ENCODE measurements at regions of chr16 and their contacts with region 1.

Region 1: DNA sequence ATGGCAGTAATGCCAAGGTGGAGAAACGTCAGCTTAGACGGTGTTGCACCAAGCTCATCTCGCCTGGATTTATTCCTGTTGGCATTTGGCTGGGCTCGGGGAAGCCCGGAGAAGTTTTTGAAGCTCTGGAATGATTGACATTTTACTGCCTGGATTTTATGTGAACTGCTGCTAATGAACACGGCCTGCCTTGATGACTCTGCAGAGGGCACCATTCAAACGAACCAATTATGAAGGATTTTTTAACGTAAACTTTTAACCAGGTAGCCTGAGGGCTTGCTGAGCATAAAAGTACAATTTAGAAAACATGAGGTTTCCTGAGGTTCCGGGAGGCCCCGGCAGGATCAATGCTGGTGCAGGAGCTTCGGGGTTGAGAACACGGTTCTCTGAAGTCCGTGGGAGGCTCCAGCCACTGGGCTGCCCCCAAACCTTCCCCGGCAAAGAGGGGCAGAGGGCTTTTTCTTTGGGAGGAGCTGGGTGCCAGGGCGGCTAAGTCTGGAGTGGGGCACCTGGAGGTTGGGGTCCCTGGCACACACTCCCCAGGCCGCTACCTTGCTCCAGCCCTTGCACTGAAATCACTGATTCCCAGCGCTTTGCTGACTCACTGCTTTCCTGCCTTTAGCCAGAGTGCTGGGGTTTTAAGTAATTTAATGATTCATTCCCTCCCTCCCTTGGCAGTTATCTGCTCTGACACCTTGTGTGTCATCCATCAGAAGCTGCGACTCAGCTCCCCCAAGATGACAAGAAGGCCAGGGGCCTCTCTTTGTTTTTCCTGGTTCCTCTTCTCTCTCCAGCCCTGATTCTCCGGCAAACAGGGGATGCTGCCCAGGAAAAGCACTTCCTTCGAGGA is 161.2 kb upstream of the IRX3 start:
- DNase-seq: no peak
- ATAC-seq: peak in 1 of 8 donors; percentile 12
- H3K4me3 ChIP-seq: no peak overlapping the region
- H3K27ac ChIP-seq: peak overlapping the region in 1 of 10 donors; percentile 58
- H3K4me1 ChIP-seq: peaks cover 0 to 18% (median 6%) of the 10 kb centered on the region in 9 donors
- H3K27me3 ChIP-seq: no peaks in the 10 kb centered on the region
- CTCF ChIP-seq: no peak

Region 2: DNA sequence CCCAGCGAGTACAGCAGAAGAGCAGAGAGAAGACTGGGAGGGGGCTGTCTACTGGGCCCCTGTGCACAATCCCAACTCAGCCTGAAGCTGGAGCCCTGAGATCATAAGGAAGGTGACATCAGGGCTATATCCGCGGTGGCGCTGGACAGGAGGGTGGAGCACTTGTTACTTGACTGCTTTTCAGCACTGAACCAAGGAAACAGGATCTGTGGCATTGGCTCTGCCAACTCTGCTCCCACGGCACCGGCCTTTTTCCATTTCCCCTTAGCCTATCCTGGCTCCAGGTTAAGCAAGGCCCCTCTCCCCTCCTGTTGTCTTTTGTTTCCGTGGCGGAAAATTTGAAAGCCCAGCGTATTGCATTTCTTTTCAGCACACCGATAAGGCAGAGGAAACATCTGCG is 36.3 kb before region 1 on chr16:
- intact Hi-C with region 1: no loop called
- DNase-seq: peak; percentile 39
- ATAC-seq: peak; percentile 68 to 86 (median 80)
- H3K4me3 ChIP-seq: peak overlapping the region in 5 of 10 donors; percentile 1 to 34 (median 15)
- H3K27ac ChIP-seq: peak overlapping the region in 3 of 10 donors; percentile 6 to 47 (median 41)
- H3K4me1 ChIP-seq: peaks cover 0 to 26% (median 3%) of the 10 kb centered on the region in 9 donors
- H3K27me3 ChIP-seq: no peaks in the 10 kb centered on the region
- CTCF ChIP-seq: peak in 2 of 9 donors; percentile 11 to 15

Region 3: DNA sequence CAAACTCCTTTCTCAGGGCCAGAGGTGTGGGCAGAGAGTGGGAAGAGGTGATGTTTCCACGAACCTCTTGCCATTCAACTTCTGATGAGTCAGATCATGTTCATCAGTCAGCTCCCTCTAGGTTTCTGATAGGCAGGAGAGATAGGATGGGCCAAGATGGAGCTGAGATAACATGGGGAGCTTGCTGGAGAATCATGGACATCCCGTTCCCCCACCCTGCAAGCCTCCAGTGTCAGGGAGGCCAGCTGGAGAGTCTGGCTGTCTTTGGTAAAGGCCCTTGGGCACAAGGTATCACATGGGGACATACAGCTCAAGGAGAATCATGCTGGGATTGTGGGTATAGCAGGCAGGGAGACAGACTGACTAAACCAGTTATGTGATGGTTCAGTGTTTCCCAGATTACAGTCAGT is 25.2 kb before region 1 on chr16:
- intact Hi-C with region 1: loop called in 1 of 10 experiments (anchors 1 kb)
- DNase-seq: no peak
- ATAC-seq: peak in 7 of 8 donors; percentile 32 to 69 (median 43)
- H3K4me3 ChIP-seq: no peak overlapping the region
- H3K27ac ChIP-seq: peak overlapping the region in 9 of 10 donors; percentile 52 to 84 (median 74)
- H3K4me1 ChIP-seq: peaks cover 0 to 33% (median 10%) of the 10 kb centered on the region in 9 donors
- H3K27me3 ChIP-seq: no peaks in the 10 kb centered on the region
- CTCF ChIP-seq: no peak

Region 4: GRCh38 chr16:54489225-54490111 is 41.7 kb after region 1 on chr16:
- intact Hi-C with region 1: loop called in 1 of 10 experiments (anchors 5 kb)
- DNase-seq: no peak
- ATAC-seq: peak in 5 of 8 donors; percentile 29 to 74 (median 61)
- H3K4me3 ChIP-seq: no peak overlapping the region
- H3K27ac ChIP-seq: peak overlapping the region in 8 of 10 donors; percentile 29 to 69 (median 52)
- H3K4me1 ChIP-seq: peaks cover 6 to 48% (median 24%) of the 10 kb centered on the region in 9 donors
- H3K27me3 ChIP-seq: no peaks in the 10 kb centered on the region
- CTCF ChIP-seq: no peak

Measured in heart right ventricle (tissue), 16 donors.